GM12878 (cell line): ENCODE measurements at regions of chr6 and their contacts with region 1.

Region 1: DNA sequence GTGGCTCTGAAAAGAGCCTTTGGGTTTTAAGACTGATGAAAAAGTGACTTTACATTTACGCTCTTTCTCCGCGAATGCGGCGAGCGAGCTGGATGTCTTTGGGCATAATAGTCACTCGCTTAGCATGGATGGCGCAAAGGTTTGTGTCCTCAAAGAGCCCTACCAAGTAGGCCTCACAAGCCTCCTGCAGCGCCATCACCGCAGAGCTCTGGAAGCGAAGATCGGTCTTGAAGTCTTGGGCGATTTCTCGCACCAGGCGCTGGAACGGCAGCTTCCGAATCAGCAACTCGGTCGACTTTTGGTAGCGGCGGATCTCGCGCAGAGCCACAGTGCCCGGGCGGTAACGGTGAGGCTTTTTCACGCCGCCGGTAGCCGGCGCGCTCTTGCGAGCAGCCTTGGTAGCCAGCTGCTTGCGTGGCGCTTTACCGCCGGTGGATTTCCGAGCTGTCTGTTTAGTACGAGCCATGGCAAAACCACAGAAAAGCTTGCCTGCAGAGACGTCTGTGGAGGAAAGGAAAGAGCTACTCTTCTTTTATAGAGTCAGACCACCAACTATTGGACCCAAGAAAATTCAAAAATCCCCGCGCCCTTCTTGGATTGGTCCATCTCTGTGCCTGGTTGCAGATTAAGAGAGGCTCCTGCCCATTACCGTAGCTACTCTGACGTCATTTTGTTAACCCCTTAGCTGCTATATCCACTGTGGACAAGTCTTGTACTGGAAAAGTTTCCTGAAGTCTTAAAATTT is 55.5 kb upstream of the HFE start:
- DNase-seq: peak; percentile 97
- ATAC-seq: peak; percentile 70
- H3K4me3 ChIP-seq: peak overlapping the region; percentile 75
- H3K27ac ChIP-seq: peak overlapping the region; percentile 95
- H3K4me1 ChIP-seq: peaks cover 9% of the 10 kb centered on the region; the same call in 1 of the 2 replicates
- H3K27me3 ChIP-seq: no peaks in the 10 kb centered on the region
- CTCF ChIP-seq: 0 out of 6 replicates have a peak, but pooled peaks of 1 of the 3 experiments have one; percentile 11
- EP300 ChIP-seq: peak in 1 of 2 experiments; percentile 10; a peak in 1 of 4 replicates
- POLR2A ChIP-seq: peak; percentile 96
- RAD21 ChIP-seq: no peak

Region 2: GRCh38 chr6:25975923-25976560 is 55.7 kb before region 1 on chr6:
- CTCF ChIA-PET with region 1: no interaction called
- POLR2A ChIA-PET with region 1: no interaction called
- RAD21 ChIA-PET with region 1: no interaction called
- SMC1A ChIA-PET with region 1: no interaction called
- in situ Hi-C with region 1: no loop called
- intact Hi-C with region 1: no loop called
- DNase-seq: no peak
- ATAC-seq: peak; percentile 44
- H3K4me3 ChIP-seq: no peak overlapping the region
- H3K27ac ChIP-seq: no peak overlapping the region
- H3K4me1 ChIP-seq: peaks cover 6% of the 10 kb centered on the region; the same call in 1 of the 2 replicates
- H3K27me3 ChIP-seq: no peaks in the 10 kb centered on the region
- CTCF ChIP-seq: no peak
- EP300 ChIP-seq: no peak
- POLR2A ChIP-seq: no peak
- RAD21 ChIP-seq: no peak

Region 3: GRCh38 chr6:26045065-26045927 is 13.5 kb after region 1 on chr6:
- CTCF ChIA-PET with region 1: interaction called, 18 read pairs
- POLR2A ChIA-PET with region 1: interaction called, 128 read pairs
- RAD21 ChIA-PET with region 1: interaction called, 38 read pairs
- SMC1A ChIA-PET with region 1: interaction called, 39 read pairs
- in situ Hi-C with region 1: no loop called
- intact Hi-C with region 1: loop called (anchors 1 kb)
- DNase-seq: peak; percentile 99
- ATAC-seq: peak; percentile 79
- H3K4me3 ChIP-seq: peak overlapping the region; percentile 64
- H3K27ac ChIP-seq: peak overlapping the region; percentile 97
- H3K4me1 ChIP-seq: peaks cover 21% of the 10 kb centered on the region
- H3K27me3 ChIP-seq: no peaks in the 10 kb centered on the region
- CTCF ChIP-seq: 0 out of 6 replicates have a peak, but pooled peaks of 2 of the 3 experiments have one; percentile 13 to 19
- EP300 ChIP-seq: no peak
- POLR2A ChIP-seq: peak; percentile 98
- RAD21 ChIP-seq: no peak

Region 4: DNA sequence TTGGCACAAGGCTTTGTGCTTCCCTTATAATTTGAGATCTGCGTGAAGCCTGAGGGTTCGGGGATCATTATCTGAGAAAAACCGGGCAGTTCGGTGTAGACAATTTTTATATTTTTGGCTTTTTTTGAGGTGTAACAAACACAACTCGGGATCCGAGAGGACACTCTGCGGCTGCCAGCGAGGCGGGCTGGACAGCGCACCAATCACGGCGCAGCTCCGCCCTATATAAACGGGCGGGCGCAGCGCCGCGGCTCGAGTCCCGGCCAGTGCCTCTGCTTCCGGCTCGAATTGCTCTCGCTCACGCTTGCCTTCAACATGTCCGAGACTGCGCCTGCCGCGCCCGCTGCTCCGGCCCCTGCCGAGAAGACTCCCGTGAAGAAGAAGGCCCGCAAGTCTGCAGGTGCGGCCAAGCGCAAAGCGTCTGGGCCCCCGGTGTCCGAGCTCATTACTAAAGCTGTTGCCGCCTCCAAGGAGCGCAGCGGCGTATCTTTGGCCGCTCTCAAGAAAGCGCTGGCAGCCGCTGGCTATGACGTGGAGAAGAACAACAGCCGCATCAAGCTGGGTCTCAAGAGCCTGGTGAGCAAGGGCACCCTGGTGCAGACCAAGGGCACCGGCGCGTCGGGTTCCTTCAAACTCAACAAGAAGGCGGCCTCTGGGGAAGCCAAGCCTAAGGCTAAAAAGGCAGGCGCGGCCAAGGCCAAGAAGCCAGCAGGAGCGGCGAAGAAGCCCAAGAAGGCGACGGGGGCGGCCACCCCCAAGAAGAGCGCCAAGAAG is 124.5 kb after region 1 on chr6:
- CTCF ChIA-PET with region 1: no interaction called
- POLR2A ChIA-PET with region 1: interaction called, 5 read pairs
- RAD21 ChIA-PET with region 1: interaction called, 4 read pairs
- SMC1A ChIA-PET with region 1: no interaction called
- in situ Hi-C with region 1: no loop called
- intact Hi-C with region 1: loop called (anchors 5 kb)
- DNase-seq: peak; percentile 90
- ATAC-seq: peak; percentile 65
- H3K4me3 ChIP-seq: peak overlapping the region; percentile 88
- H3K27ac ChIP-seq: peak overlapping the region; percentile 94
- H3K4me1 ChIP-seq: peaks cover 11% of the 10 kb centered on the region
- H3K27me3 ChIP-seq: no peaks in the 10 kb centered on the region
- CTCF ChIP-seq: no peak
- EP300 ChIP-seq: no peak; a peak in 1 of 4 replicates
- POLR2A ChIP-seq: peak; percentile 93
- RAD21 ChIP-seq: no peak

Region 5: GRCh38 chr6:26223650-26224546 is 192.1 kb after region 1 on chr6:
- CTCF ChIA-PET with region 1: no interaction called
- POLR2A ChIA-PET with region 1: no interaction called
- RAD21 ChIA-PET with region 1: no interaction called
- SMC1A ChIA-PET with region 1: no interaction called
- in situ Hi-C with region 1: no loop called
- intact Hi-C with region 1: no loop called
- DNase-seq: peak; percentile 78
- ATAC-seq: peak; percentile 85
- H3K4me3 ChIP-seq: peak overlapping the region; percentile 79
- H3K27ac ChIP-seq: peak overlapping the region; percentile 96
- H3K4me1 ChIP-seq: peaks cover 21% of the 10 kb centered on the region
- H3K27me3 ChIP-seq: no peaks in the 10 kb centered on the region
- CTCF ChIP-seq: no peak
- EP300 ChIP-seq: no peak
- POLR2A ChIP-seq: no peak
- RAD21 ChIP-seq: no peak

Region 6: GRCh38 chr6:27132532-27133280 is 1100.9 kb after region 1 on chr6:
- CTCF ChIA-PET with region 1: no interaction called
- POLR2A ChIA-PET with region 1: no interaction called
- RAD21 ChIA-PET with region 1: interaction called, 3 read pairs
- SMC1A ChIA-PET with region 1: no interaction called
- in situ Hi-C with region 1: no loop called
- intact Hi-C with region 1: loop called (anchors 2 kb)
- DNase-seq: peak; percentile 100
- ATAC-seq: peak; percentile 72
- H3K4me3 ChIP-seq: peak overlapping the region; percentile 65
- H3K27ac ChIP-seq: peak overlapping the region; percentile 94
- H3K4me1 ChIP-seq: peaks cover 22% of the 10 kb centered on the region
- H3K27me3 ChIP-seq: no peaks in the 10 kb centered on the region
- CTCF ChIP-seq: no peak
- EP300 ChIP-seq: peak in 1 of 2 experiments; percentile 20; a peak in 1 of 4 replicates
- POLR2A ChIP-seq: peak; percentile 93
- RAD21 ChIP-seq: no peak

Region 7: DNA sequence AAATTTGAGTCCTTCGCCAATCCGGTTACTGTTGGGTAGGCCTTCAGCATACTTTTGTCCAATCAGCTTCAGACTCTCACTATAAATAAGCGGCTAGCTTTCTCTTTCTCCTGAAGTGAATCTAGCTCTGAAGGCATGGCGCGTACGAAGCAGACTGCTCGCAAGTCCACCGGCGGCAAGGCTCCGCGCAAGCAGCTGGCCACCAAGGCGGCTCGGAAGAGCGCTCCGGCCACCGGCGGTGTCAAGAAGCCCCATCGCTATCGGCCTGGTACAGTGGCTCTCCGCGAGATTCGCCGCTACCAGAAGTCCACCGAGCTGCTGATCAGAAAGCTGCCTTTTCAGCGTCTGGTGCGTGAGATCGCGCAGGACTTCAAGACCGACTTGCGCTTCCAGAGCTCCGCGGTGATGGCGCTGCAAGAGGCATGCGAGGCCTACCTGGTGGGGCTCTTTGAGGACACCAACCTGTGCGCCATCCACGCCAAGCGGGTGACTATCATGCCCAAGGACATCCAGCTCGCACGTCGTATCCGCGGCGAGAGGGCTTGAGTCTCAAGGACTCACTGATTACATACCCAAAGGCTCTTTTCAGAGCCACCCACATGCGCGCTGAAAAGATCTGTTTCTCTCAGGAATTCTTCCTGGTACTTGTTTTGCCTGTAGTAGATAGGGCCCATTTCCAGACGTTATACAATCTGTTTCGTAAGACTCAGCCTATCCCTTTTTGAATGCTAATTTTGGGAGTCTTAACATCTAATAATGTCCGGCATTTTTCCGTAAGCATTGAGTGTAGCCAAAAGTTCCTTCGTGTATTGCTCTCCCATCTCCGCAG is 1778.4 kb after region 1 on chr6:
- CTCF ChIA-PET with region 1: no interaction called
- POLR2A ChIA-PET with region 1: interaction called, 3 read pairs
- RAD21 ChIA-PET with region 1: no interaction called
- SMC1A ChIA-PET with region 1: no interaction called
- in situ Hi-C with region 1: loop called (anchors 5 kb)
- intact Hi-C with region 1: loop called (anchors 2 kb)
- DNase-seq: peak; percentile 98
- ATAC-seq: peak; percentile 43
- H3K4me3 ChIP-seq: peak overlapping the region; percentile 74
- H3K27ac ChIP-seq: peak overlapping the region; percentile 82
- H3K4me1 ChIP-seq: peaks cover 25% of the 10 kb centered on the region
- H3K27me3 ChIP-seq: no peaks in the 10 kb centered on the region
- CTCF ChIP-seq: peak in 1 of 3 experiments; percentile 19; a peak in 2 of 6 replicates
- EP300 ChIP-seq: no peak
- POLR2A ChIP-seq: peak; percentile 95
- RAD21 ChIP-seq: no peak